Lower lobe of right lung (tissue), 2 donors: ENCODE measurements at regions of chr5 and their contacts with region 1.

Region 1: GRCh38 chr5:134527146-134527960 is 1.9 kb downstream of the JADE2 start:
- DNase-seq: peak; percentile 85
- ATAC-seq: peak; percentile 75 to 81
- H3K4me3 ChIP-seq: peak overlapping the region; percentile 98
- H3K27ac ChIP-seq: peak overlapping the region; percentile 99
- H3K4me1 ChIP-seq: peaks cover 51% of the 10 kb centered on the region
- H3K27me3 ChIP-seq: no peaks in the 10 kb centered on the region
- CTCF ChIP-seq: peak; percentile 74

Region 2: DNA sequence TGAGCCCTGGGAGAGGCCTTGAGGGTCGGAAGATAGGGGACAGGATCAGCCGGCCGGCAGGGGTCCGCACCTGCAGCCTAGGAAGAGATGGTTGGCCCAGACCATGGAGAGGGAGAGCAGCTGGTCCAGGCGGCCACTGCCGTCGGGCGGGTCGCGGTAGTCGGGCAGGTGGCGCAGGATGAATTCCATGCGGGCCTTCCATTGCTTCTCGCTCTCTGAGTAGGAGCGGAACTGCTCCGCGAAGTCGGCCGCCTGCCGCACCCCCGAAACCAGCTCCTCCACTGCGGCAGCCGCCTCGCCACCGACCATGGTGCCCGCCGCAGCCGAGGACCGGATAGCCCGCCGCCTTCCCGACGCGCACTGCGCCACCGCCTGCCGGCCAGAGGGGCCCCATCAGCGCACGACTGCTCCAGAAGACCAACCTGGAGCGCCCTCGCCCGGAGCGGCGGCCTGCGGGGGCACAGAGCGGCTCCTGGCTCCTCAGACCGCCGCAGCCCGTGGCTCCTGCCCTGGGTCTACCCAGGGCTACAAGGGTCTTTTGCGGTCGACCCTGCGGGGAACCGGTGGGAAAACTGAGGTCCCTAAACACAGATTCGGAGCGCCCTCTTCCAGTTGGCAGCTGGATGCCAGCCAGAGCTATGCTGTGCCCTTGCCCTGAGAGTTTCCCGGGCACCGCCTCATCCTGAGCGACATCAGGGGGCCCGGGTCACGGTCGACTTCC is 115.6 kb before region 1 on chr5 and contains the start of gene CDKN2AIPNL:
- intact Hi-C with region 1: loop called (anchors 5 kb)
- DNase-seq: peak; percentile 94
- ATAC-seq: peak; percentile 99 to 100
- H3K4me3 ChIP-seq: peak within 1 kb of the TSS; percentile 92
- H3K27ac ChIP-seq: peak within 1 kb of the TSS; percentile 90
- H3K4me1 ChIP-seq: peaks cover 29% of the 10 kb centered on the region
- H3K27me3 ChIP-seq: no peaks in the 10 kb centered on the region
- CTCF ChIP-seq: peak; percentile 85
- total RNA-seq, gene CDKN2AIPNL: 14.5 TPM